GM12878 (cell line): ENCODE measurements at regions of chr3 and their contacts with region 1.

Region 1: DNA sequence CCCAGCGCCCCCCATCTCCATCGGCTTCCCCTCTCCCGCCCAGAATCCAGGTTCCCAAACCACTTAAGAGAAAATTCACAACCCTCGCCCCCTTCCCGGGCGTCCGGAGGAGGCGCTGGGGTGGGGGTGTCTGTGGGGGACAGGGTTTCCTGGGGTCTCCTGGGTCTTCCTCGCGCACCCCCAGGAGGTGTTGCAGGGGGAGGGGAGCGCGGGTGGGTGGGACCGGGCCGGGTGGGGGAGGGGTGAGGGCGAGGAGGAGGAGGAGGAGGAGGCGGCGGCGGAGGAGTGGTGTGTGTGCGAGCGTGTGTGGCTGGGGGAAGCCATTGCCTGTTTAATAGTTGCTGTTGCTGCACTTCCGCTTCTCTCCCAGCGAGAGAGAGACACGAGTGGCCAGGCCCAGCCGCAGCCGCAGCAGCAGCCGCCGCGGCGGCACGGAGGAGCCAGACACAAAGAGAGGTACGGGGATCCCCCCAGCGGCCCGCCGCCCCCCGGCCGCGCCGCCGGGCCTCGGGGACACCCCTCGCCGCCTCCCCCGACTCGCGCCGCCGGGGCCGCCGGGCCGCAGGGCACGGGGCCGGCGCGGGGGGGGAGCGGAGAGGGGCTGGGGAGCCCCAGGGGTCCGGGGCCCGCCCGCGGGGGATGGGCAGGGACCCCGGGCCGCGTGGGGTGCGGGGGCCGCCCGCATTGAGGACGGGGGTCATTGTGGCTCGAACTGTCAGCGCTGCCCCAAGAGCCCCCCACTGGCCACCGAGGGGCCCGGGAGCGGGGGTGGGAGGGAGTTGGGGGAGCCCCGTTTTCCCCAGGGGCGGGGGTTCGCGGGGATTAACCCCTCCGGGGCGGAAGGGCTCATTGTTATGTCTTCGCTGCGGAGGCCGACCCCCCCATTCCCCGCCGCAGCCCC is at the start of gene UBE2E1:
- DNase-seq: no peak
- ATAC-seq: peak; percentile 71
- H3K4me3 ChIP-seq: peak within 1 kb of the TSS; percentile 98
- H3K27ac ChIP-seq: peak within 1 kb of the TSS; percentile 82
- H3K4me1 ChIP-seq: peaks cover 8% of the 10 kb centered on the region
- H3K27me3 ChIP-seq: no peaks in the 10 kb centered on the region
- CTCF ChIP-seq: no peak
- EP300 ChIP-seq: 0 out of 4 replicates have a peak, but pooled peaks of 1 of the 2 experiments have one; percentile 57
- POLR2A ChIP-seq: peak; percentile 84
- RAD21 ChIP-seq: no peak
- polyA plus RNA-seq, gene UBE2E1: 113 to 128 TPM

Region 2: GRCh38 chr3:22565393-22565792 is 1240.5 kb before region 1 on chr3:
- CTCF ChIA-PET with region 1: no interaction called
- POLR2A ChIA-PET with region 1: no interaction called
- RAD21 ChIA-PET with region 1: no interaction called
- SMC1A ChIA-PET with region 1: no interaction called
- in situ Hi-C with region 1: no loop called
- intact Hi-C with region 1: loop called (anchors 10 kb)
- DNase-seq: no peak
- ATAC-seq: no peak
- H3K4me3 ChIP-seq: no peak overlapping the region
- H3K27ac ChIP-seq: no peak overlapping the region
- H3K4me1 ChIP-seq: no peaks in the 10 kb centered on the region
- H3K27me3 ChIP-seq: no peaks in the 10 kb centered on the region
- CTCF ChIP-seq: no peak
- EP300 ChIP-seq: no peak
- POLR2A ChIP-seq: no peak
- RAD21 ChIP-seq: no peak

Region 3: DNA sequence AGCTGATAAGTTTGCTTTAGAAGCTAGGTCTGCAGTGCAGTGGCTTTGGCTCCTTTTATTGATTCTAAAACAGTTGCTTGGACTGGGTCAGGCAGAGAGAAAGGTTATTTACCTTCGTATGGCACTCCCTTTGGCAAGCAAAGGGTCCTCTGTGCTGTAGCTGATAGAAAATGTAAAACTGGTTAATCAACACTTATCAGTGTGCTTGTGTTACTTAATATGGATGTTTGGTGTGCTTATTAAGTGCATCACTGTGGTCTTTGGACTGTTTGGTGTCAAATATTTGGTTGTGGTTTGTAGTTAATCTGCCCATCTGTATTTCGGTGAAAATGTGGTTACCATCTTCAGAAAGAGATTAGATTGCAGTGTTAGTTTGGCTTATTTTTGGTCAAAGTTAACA is 586.8 kb before region 1 on chr3:
- CTCF ChIA-PET with region 1: no interaction called
- POLR2A ChIA-PET with region 1: no interaction called
- RAD21 ChIA-PET with region 1: no interaction called
- SMC1A ChIA-PET with region 1: interaction called, 6 read pairs
- in situ Hi-C with region 1: no loop called
- intact Hi-C with region 1: loop called (anchors 5 kb)
- DNase-seq: no peak
- ATAC-seq: peak; percentile 70
- H3K4me3 ChIP-seq: no peak overlapping the region
- H3K27ac ChIP-seq: peak overlapping the region; percentile 41; the same call in 1 of the 2 replicates
- H3K4me1 ChIP-seq: peaks cover 36% of the 10 kb centered on the region
- H3K27me3 ChIP-seq: no peaks in the 10 kb centered on the region
- CTCF ChIP-seq: no peak
- EP300 ChIP-seq: no peak
- POLR2A ChIP-seq: no peak
- RAD21 ChIP-seq: no peak

Region 4: DNA sequence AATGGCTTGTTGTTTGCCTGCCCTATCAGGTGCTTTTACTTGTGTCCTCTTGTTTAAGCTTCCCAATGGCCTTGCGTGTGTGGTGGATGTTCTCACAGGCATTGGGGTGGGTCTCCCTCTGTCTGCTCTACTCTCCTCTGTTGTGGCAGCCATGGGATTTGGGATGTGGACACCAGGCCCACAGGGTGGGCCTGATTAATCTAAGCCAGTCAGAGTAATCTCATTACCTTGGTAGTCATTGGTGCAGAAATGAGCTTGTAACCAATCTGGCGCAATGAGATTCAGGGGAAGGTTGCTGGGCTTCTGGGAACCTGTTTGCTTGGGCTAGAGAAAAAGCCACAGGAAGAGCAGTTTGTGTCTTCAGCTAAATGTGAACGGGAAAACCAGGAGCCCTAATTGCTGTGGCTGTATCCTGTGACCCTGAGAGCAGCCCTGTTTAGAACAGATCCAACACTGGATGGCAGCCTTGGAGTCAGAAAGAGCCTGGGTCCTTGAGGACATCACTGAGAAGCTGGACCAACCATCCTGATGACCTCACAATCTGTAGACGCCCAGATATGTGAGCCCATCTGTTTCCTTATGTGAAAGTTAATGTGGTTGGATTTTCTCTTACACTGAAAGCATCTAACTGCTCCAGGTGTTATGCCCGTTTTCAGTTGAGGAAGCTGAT is 157.4 kb before region 1 on chr3:
- CTCF ChIA-PET with region 1: no interaction called
- POLR2A ChIA-PET with region 1: interaction called, 3 read pairs
- RAD21 ChIA-PET with region 1: interaction called, 3 read pairs
- SMC1A ChIA-PET with region 1: interaction called, 6 read pairs
- in situ Hi-C with region 1: no loop called
- intact Hi-C with region 1: loop called (anchors 5 kb)
- DNase-seq: no peak
- ATAC-seq: peak; percentile 20
- H3K4me3 ChIP-seq: no peak overlapping the region
- H3K27ac ChIP-seq: no peak overlapping the region
- H3K4me1 ChIP-seq: peaks cover 26% of the 10 kb centered on the region
- H3K27me3 ChIP-seq: no peaks in the 10 kb centered on the region
- CTCF ChIP-seq: peak in 1 of 3 experiments; percentile 7; a peak in 1 of 6 replicates
- EP300 ChIP-seq: no peak
- POLR2A ChIP-seq: no peak
- RAD21 ChIP-seq: peak; percentile 43; the same call in 1 of the 2 replicates

Region 5: GRCh38 chr3:23826382-23827064 is 20.6 kb after region 1 on chr3:
- CTCF ChIA-PET with region 1: interaction called, 36 read pairs
- POLR2A ChIA-PET with region 1: interaction called, 92 read pairs
- RAD21 ChIA-PET with region 1: interaction called, 96 read pairs
- SMC1A ChIA-PET with region 1: interaction called, 224 read pairs
- in situ Hi-C with region 1: no loop called
- intact Hi-C with region 1: loop called (anchors 1 kb)
- DNase-seq: no peak
- ATAC-seq: no peak
- H3K4me3 ChIP-seq: no peak overlapping the region
- H3K27ac ChIP-seq: peak overlapping the region; percentile 52; the same call in 1 of the 2 replicates
- H3K4me1 ChIP-seq: peaks cover 42% of the 10 kb centered on the region
- H3K27me3 ChIP-seq: no peaks in the 10 kb centered on the region
- CTCF ChIP-seq: no peak
- EP300 ChIP-seq: no peak
- POLR2A ChIP-seq: no peak
- RAD21 ChIP-seq: no peak

Region 6: GRCh38 chr3:23865595-23866450 is 59.9 kb after region 1 on chr3:
- CTCF ChIA-PET with region 1: interaction called, 3 read pairs
- POLR2A ChIA-PET with region 1: interaction called, 6 read pairs
- RAD21 ChIA-PET with region 1: interaction called, 18 read pairs
- SMC1A ChIA-PET with region 1: interaction called, 24 read pairs
- in situ Hi-C with region 1: no loop called
- intact Hi-C with region 1: loop called (anchors 5 kb)
- DNase-seq: peak; percentile 45
- ATAC-seq: peak; percentile 89
- H3K4me3 ChIP-seq: peak overlapping the region; percentile 10; the same call in 1 of the 2 replicates
- H3K27ac ChIP-seq: peak overlapping the region; percentile 63
- H3K4me1 ChIP-seq: peaks cover 22% of the 10 kb centered on the region
- H3K27me3 ChIP-seq: no peaks in the 10 kb centered on the region
- CTCF ChIP-seq: no peak
- EP300 ChIP-seq: peak; percentile 63 to 77; a peak in 2 of 4 replicates
- POLR2A ChIP-seq: no peak
- RAD21 ChIP-seq: no peak

Region 7: GRCh38 chr3:23945903-23946751 is 140.2 kb after region 1 on chr3:
- CTCF ChIA-PET with region 1: no interaction called
- POLR2A ChIA-PET with region 1: interaction called, 5 read pairs
- RAD21 ChIA-PET with region 1: no interaction called
- SMC1A ChIA-PET with region 1: no interaction called
- in situ Hi-C with region 1: no loop called
- intact Hi-C with region 1: loop called (anchors 5 kb)
- DNase-seq: peak; percentile 66
- ATAC-seq: peak; percentile 81
- H3K4me3 ChIP-seq: peak overlapping the region; percentile 98
- H3K27ac ChIP-seq: peak overlapping the region; percentile 82
- H3K4me1 ChIP-seq: peaks cover 12% of the 10 kb centered on the region
- H3K27me3 ChIP-seq: peaks cover 0 to 3% of the 10 kb centered on the region in 2 experiments; a peak in 1 of 4 replicates
- CTCF ChIP-seq: no peak
- EP300 ChIP-seq: peak in 1 of 2 experiments; percentile 39; a peak in 1 of 4 replicates
- POLR2A ChIP-seq: peak; percentile 78
- RAD21 ChIP-seq: no peak